CD14-positive monocyte (primary cell): ENCODE measurements at regions of chr12 and their contacts with region 1.

Region 1: GRCh38 chr12:110698171-110698902 is 9.4 kb upstream of the HVCN1 start:
- DNase-seq: peak; percentile 85 to 96 (median 91)
- H3K4me3 ChIP-seq: peak overlapping the region; percentile 10 to 72 (median 23)
- H3K4me3 Mint-ChIP-seq: peak overlapping the region; percentile 76 to 87
- H3K27ac ChIP-seq: peak overlapping the region; percentile 62 to 90
- H3K27ac Mint-ChIP-seq: peak overlapping the region; percentile 88 to 95 (median 93)
- H3K4me1 ChIP-seq: peaks cover 62 to 63% of the 10 kb centered on the region in 2 donors
- H3K4me1 Mint-ChIP-seq: peaks cover 63% of the 10 kb centered on the region
- H3K27me3 ChIP-seq: no peaks in the 10 kb centered on the region
- H3K27me3 Mint-ChIP-seq: peaks cover 0 to 3% (median 2%) of the 10 kb centered on the region in 3 donors
- CTCF ChIP-seq: peak; percentile 87

Region 2: DNA sequence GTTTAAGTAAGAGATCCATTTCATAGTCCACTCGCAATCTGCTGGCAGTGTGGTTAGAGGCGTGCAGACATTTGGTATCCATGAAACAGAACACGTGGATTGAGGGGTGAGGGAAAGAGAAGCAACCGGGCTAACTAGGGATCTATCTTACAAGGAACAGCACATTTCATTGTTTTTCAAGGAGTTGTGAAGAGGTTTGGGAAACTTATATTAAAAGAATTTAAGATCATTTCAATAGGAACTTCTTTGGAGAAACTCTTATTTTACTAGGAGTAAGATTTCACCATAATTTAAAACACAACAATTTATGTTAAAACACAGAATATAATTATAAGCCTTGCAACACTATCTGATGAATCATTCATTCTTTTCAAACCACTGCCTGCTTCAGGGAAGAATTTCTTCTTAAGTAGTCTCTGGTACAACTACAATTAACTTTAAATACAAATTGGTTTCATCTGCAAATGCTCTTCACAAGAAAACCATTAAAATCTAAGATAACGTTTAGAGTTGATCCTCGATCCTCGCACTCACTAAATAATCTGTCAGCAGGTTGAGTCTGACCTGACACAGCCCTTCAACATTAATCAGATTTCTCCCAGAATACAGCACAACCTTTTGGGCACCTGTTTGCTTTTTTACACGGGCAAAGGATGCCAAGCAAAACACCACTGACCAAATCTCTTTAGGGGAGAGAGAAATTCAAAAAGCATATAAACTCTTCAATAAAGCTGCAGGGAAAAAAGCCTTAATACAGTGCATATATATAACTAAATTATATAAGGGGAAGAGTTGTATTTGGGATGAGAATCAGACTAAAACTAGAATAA is 142.5 kb before region 1 on chr12:
- intact Hi-C with region 1: loop called in 1 of 2 experiments (anchors 10 kb)
- DNase-seq: peak; percentile 9 to 54 (median 15)
- H3K4me3 ChIP-seq: no peak overlapping the region
- H3K4me3 Mint-ChIP-seq: peak overlapping the region in 1 of 2 donors; percentile 0
- H3K27ac ChIP-seq: peak overlapping the region in 1 of 2 donors; percentile 53
- H3K27ac Mint-ChIP-seq: peak overlapping the region; percentile 34 to 85 (median 68)
- H3K4me1 ChIP-seq: peaks cover 24 to 36% of the 10 kb centered on the region in 2 donors
- H3K4me1 Mint-ChIP-seq: peaks cover 42% of the 10 kb centered on the region
- H3K27me3 ChIP-seq: no peaks in the 10 kb centered on the region
- H3K27me3 Mint-ChIP-seq: no peaks in the 10 kb centered on the region
- CTCF ChIP-seq: no peak

Region 3: DNA sequence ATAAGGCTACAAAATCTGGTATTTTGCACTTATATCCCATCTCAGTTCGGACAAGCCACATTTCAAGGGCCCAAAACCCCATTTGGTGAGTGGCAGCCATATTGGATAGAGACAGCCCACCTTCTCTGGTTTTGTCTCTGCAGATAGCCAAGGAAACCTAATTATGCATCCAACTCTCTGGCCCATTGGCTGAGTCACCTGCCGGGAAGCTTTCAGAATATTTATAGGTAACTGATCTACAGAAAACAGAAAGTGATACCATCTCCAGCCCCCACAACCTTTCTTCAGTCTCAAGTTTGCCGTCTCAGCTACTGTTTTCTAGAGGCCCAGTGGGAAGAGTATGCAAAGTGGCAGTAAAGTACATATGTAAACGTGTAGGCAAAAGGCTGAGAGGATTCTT is 78.1 kb after region 1 on chr12:
- intact Hi-C with region 1: no loop called
- DNase-seq: no peak
- H3K4me3 ChIP-seq: no peak overlapping the region
- H3K4me3 Mint-ChIP-seq: no peak overlapping the region
- H3K27ac ChIP-seq: no peak overlapping the region
- H3K27ac Mint-ChIP-seq: no peak overlapping the region
- H3K4me1 ChIP-seq: peaks cover 0 to under 1% of the 10 kb centered on the region in 2 donors
- H3K4me1 Mint-ChIP-seq: peaks cover 13% of the 10 kb centered on the region
- H3K27me3 ChIP-seq: no peaks in the 10 kb centered on the region
- H3K27me3 Mint-ChIP-seq: peaks cover 0 to 5% (median 0%) of the 10 kb centered on the region in 3 donors
- CTCF ChIP-seq: no peak